ENCODE measurements at regions of chr7 and their contacts with region 1.

Region 1: GRCh38 chr7:103766660-103767059 is 222.8 kb downstream of the RELN start:
- DNase-seq: no peak
- ATAC-seq: no peak
- H3K4me3 ChIP-seq: no peak overlapping the region
- H3K4me3 Mint-ChIP-seq: no peak overlapping the region
- H3K27ac ChIP-seq: no peak overlapping the region
- H3K27ac Mint-ChIP-seq: no peak overlapping the region
- H3K4me1 ChIP-seq: no peaks in the 10 kb centered on the region
- H3K4me1 Mint-ChIP-seq: no peaks in the 10 kb centered on the region
- H3K27me3 ChIP-seq: no peaks in the 10 kb centered on the region
- H3K27me3 Mint-ChIP-seq: peaks cover 4% of the 10 kb centered on the region
- CTCF ChIP-seq: no peak

Region 2: GRCh38 chr7:103748680-103749079 is 18.0 kb before region 1 on chr7:
- CTCF ChIA-PET with region 1: no interaction called
- POLR2A ChIA-PET with region 1: no interaction called
- intact Hi-C with region 1: loop called in 1 of 2 experiments (anchors 2 kb)
- DNase-seq: no peak
- ATAC-seq: no peak
- H3K4me3 ChIP-seq: no peak overlapping the region
- H3K4me3 Mint-ChIP-seq: no peak overlapping the region
- H3K27ac ChIP-seq: no peak overlapping the region
- H3K27ac Mint-ChIP-seq: no peak overlapping the region
- H3K4me1 ChIP-seq: no peaks in the 10 kb centered on the region
- H3K4me1 Mint-ChIP-seq: no peaks in the 10 kb centered on the region
- H3K27me3 ChIP-seq: no peaks in the 10 kb centered on the region
- H3K27me3 Mint-ChIP-seq: peaks cover 2% of the 10 kb centered on the region
- CTCF ChIP-seq: no peak

Region 3: GRCh38 chr7:103777440-103777839 is 10.8 kb after region 1 on chr7:
- CTCF ChIA-PET with region 1: no interaction called
- POLR2A ChIA-PET with region 1: no interaction called
- intact Hi-C with region 1: no loop called
- DNase-seq: no peak
- ATAC-seq: no peak
- H3K4me3 ChIP-seq: no peak overlapping the region
- H3K4me3 Mint-ChIP-seq: no peak overlapping the region
- H3K27ac ChIP-seq: no peak overlapping the region
- H3K27ac Mint-ChIP-seq: no peak overlapping the region
- H3K4me1 ChIP-seq: no peaks in the 10 kb centered on the region
- H3K4me1 Mint-ChIP-seq: no peaks in the 10 kb centered on the region
- H3K27me3 ChIP-seq: peaks cover 0 to 3% of the 10 kb centered on the region in 2 experiments
- H3K27me3 Mint-ChIP-seq: peaks cover 2% of the 10 kb centered on the region
- CTCF ChIP-seq: no peak

Region 4: DNA sequence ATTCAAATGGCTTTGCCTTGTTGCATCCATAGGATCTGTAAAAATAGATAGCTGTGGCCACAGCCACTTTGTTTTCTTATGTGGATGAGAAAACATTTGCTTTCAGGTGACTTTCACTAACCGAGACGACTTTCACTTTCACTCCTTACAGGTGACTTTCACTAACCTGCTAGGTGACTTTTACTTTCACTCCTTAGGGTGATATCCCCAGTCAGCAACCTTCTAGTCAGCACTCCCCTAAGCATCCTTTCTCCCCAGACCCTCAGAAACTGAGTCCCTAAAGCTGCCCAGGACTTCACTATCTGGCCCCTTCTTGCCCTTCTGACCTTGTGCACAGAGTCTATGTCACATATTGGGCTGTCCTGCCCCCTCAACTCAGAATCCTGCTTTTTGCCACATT is 45.3 kb after region 1 on chr7:
- CTCF ChIA-PET with region 1: no interaction called
- POLR2A ChIA-PET with region 1: no interaction called
- intact Hi-C with region 1: no loop called
- DNase-seq: peak in 2 of 9 experiments; percentile 10 to 34
- ATAC-seq: peak; percentile 48
- H3K4me3 ChIP-seq: no peak overlapping the region
- H3K4me3 Mint-ChIP-seq: peak overlapping the region; percentile 54
- H3K27ac ChIP-seq: no peak overlapping the region
- H3K27ac Mint-ChIP-seq: peak overlapping the region; percentile 4
- H3K4me1 ChIP-seq: no peaks in the 10 kb centered on the region
- H3K4me1 Mint-ChIP-seq: peaks cover 28% of the 10 kb centered on the region
- H3K27me3 ChIP-seq: no peaks in the 10 kb centered on the region
- H3K27me3 Mint-ChIP-seq: peaks cover 4% of the 10 kb centered on the region
- CTCF ChIP-seq: no peak

Measured in CD8-positive, alpha-beta T cell (primary cell).